B cell (primary cell): ENCODE measurements at regions of chr6 and their contacts with region 1.

Region 1: GRCh38 chr6:2749969-2750600 is 637 bp downstream of the MYLK4 start:
- DNase-seq: peak; percentile 78
- ATAC-seq: peak; percentile 73
- H3K4me3 ChIP-seq: no peak overlapping the region
- H3K4me3 Mint-ChIP-seq: no peak overlapping the region
- H3K27ac ChIP-seq: no peak overlapping the region
- H3K27ac Mint-ChIP-seq: no peak overlapping the region
- H3K4me1 ChIP-seq: no peaks in the 10 kb centered on the region
- H3K4me1 Mint-ChIP-seq: peaks cover 7% of the 10 kb centered on the region
- H3K27me3 ChIP-seq: peaks cover 0 to 24% (median 14%) of the 10 kb centered on the region in 4 experiments
- H3K27me3 Mint-ChIP-seq: peaks cover 32% of the 10 kb centered on the region
- CTCF ChIP-seq: peak; percentile 93

Region 2: GRCh38 chr6:2733324-2733723 is 16.8 kb before region 1 on chr6:
- CTCF ChIA-PET with region 1: interaction called, 98 read pairs
- POLR2A ChIA-PET with region 1: no interaction called
- intact Hi-C with region 1: loop called (anchors 1 kb)
- DNase-seq: peak; percentile 91
- ATAC-seq: peak; percentile 98
- H3K4me3 ChIP-seq: no peak overlapping the region
- H3K4me3 Mint-ChIP-seq: peak overlapping the region; percentile 14
- H3K27ac ChIP-seq: peak overlapping the region; percentile 62 to 88
- H3K27ac Mint-ChIP-seq: peak overlapping the region; percentile 87
- H3K4me1 ChIP-seq: peaks cover 10 to 14% of the 10 kb centered on the region in 2 donors
- H3K4me1 Mint-ChIP-seq: peaks cover 13% of the 10 kb centered on the region
- H3K27me3 ChIP-seq: no peaks in the 10 kb centered on the region
- H3K27me3 Mint-ChIP-seq: no peaks in the 10 kb centered on the region
- CTCF ChIP-seq: no peak

Region 3: DNA sequence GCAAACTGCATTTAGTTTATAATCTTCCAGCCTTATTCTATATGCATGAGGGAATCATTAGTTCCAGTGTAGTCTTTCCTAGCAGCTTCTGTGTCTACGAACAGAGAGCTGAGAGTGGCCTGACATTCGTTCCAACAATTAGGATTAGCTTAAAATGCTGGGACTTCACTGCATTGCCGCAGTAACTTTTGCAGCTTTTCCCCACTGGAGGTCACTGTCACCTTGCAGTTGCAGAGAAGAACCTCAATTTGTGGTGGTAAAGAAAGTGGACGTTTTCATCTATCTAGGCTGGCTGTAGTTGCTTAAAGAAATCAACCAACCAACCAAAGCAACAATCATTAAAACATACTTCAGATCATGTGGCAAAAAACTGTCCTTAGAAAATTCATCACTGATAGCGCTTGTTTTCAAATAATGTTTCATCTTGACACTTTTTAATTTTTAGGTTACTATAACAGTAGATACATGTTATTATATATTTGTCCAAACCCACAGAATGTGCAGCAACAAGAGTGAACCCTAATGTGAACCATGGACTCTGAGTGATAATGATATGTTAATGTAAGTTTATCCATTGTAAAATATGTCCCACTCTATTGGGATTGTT is 11.6 kb before region 1 on chr6:
- CTCF ChIA-PET with region 1: interaction called, 98 read pairs
- POLR2A ChIA-PET with region 1: no interaction called
- intact Hi-C with region 1: loop called (anchors 1 kb)
- DNase-seq: peak; percentile 62
- ATAC-seq: peak; percentile 31
- H3K4me3 ChIP-seq: no peak overlapping the region
- H3K4me3 Mint-ChIP-seq: no peak overlapping the region
- H3K27ac ChIP-seq: no peak overlapping the region
- H3K27ac Mint-ChIP-seq: no peak overlapping the region
- H3K4me1 ChIP-seq: peaks cover 3 to 4% of the 10 kb centered on the region in 2 donors
- H3K4me1 Mint-ChIP-seq: peaks cover 5% of the 10 kb centered on the region
- H3K27me3 ChIP-seq: no peaks in the 10 kb centered on the region
- H3K27me3 Mint-ChIP-seq: peaks cover 2% of the 10 kb centered on the region
- CTCF ChIP-seq: peak; percentile 71

Region 4: DNA sequence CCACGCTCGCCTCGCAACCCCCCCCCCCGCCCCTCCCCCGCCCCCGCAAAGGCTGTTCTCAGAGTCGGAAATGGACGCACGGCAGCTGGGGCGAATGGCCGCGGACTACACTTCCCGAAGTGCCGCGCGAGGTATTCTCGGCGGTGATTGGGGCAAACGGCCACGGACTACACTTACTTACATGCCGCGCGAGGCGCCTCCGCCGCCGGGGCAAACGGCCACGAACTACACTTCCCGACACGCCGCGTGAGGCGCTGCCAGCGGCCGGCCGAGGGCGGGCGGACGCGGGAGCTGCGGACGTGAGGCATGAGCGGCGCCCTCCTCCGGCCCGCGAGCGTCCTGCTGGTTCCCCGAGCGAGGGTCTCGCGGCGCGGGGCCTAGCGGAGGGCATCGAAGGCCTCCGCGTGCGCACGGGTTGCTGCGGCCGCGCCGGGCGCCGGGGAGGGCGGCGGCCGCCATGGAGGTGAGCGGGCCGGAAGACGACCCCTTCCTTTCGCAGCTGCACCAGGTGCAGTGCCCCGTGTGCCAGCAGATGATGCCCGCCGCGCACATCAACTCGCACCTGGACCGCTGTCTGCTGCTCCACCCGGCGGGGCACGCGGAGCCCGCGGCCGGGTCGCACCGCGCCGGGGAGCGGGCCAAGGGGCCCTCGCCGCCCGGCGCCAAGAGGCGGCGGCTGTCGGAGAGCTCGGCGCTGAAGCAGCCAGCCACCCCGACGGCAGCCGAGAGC is 15.2 kb after region 1 on chr6 and contains the start of gene WRNIP1:
- CTCF ChIA-PET with region 1: interaction called, 16 read pairs
- POLR2A ChIA-PET with region 1: no interaction called
- intact Hi-C with region 1: no loop called
- DNase-seq: peak; percentile 98
- ATAC-seq: peak; percentile 87
- H3K4me3 ChIP-seq: peak within 1 kb of the TSS; percentile 66 to 90 (median 77)
- H3K4me3 Mint-ChIP-seq: peak within 1 kb of the TSS; percentile 98
- H3K27ac ChIP-seq: peak within 1 kb of the TSS; percentile 96 to 97
- H3K27ac Mint-ChIP-seq: peak within 1 kb of the TSS; percentile 100
- H3K4me1 ChIP-seq: peaks cover 25 to 33% of the 10 kb centered on the region in 2 donors
- H3K4me1 Mint-ChIP-seq: peaks cover 43% of the 10 kb centered on the region
- H3K27me3 ChIP-seq: no peaks in the 10 kb centered on the region
- H3K27me3 Mint-ChIP-seq: no peaks in the 10 kb centered on the region
- CTCF ChIP-seq: peak; percentile 60
- total RNA-seq, gene WRNIP1: 32.1 and 35.2 TPM in 2 replicates